A549 (cell line): ENCODE measurements at regions of chr1 and their contacts with region 1.

Region 1: DNA sequence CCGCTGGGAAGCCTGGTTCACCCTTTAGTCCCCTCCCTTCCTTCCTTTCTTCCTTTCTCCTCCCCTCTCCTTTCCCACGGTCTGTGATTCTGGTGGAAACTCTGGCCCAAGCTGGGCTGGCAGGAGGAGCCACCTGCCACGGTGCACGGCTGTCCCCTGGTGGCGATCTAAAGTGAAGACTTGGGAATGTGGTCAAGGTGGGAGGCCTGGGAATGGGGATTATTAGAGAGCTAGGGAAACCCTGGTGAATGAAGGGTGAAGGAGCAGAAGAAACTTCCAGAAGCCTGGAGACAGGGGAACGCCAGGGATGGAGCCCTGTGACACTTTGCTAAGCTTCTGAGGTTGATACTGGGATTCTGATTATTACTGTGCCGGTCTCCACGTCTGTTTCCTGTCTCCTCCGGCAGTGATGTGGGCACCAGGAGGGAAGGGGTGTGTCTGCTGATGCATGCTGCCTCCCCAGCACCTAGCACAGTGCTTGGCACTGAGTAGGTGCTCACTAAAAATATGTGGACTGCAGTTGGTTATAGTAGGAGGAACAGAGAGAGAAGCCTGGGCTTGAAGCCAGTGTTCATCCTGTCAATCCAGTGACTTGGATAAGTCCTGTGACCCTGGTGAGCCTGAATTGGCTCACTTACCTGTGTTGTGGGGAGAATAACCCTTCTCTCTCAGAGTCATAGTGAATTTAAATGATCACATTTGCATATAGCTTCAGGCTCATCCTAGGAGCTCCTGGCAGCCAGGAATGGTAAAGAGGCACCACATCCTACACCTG is 71.2 kb upstream of the NBPF3 start:
- DNase-seq: peak; percentile 37 to 78
- ATAC-seq: peak; percentile 96 to 97
- H3K4me3 ChIP-seq: no peak overlapping the region
- H3K27ac ChIP-seq: peak overlapping the region; percentile 32 to 65; a peak in 4 of 6 replicates
- H3K4me1 ChIP-seq: peaks cover 4% of the 10 kb centered on the region; the same call in 1 of the 3 replicates
- CTCF ChIP-seq: peak; percentile 94
- EP300 ChIP-seq: no peak
- POLR2A ChIP-seq: no peak
- RAD21 ChIP-seq: peak; percentile 99 to 100

Region 2: GRCh38 chr1:21238141-21238800 is 130.4 kb before region 1 on chr1:
- CTCF ChIA-PET with region 1: interaction called, 115 read pairs
- POLR2A ChIA-PET with region 1: no interaction called
- DNase-seq: no peak
- ATAC-seq: no peak
- H3K4me3 ChIP-seq: no peak overlapping the region
- H3K27ac ChIP-seq: no peak overlapping the region
- H3K4me1 ChIP-seq: no peaks in the 10 kb centered on the region
- CTCF ChIP-seq: no peak
- EP300 ChIP-seq: no peak
- POLR2A ChIP-seq: no peak
- RAD21 ChIP-seq: no peak

Region 3: DNA sequence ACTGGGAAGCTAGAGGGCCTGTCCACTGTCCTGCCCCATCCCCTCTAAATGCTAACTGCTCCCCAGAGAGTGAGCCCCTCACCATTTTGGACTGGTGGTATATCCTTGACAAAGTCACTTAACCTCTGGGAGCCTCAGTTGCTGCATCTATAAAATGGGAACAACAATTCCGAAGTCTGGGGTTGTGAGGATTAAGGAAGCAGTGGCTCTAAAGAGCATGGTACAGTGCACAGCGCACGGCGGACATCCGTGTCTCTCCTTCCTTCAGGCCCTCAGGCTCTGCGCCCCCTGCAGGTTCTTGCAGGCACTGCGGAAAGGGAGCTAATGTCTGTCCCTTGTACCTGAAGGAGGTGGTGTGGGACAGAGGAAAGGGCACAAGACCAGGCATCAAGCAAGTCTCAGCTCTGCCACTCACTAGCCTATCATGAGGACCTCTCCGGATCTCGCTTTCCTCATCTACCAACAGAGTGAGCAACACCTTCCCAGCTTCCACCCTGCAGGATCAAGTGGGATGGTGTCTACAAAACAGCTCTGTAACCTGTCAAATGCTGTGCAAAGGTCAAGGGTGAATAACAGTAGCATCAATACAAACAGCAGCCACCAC is 98.5 kb before region 1 on chr1:
- CTCF ChIA-PET with region 1: interaction called, 41 read pairs
- POLR2A ChIA-PET with region 1: no interaction called
- DNase-seq: peak; percentile 74 to 75
- ATAC-seq: peak; percentile 65 to 78; a peak in 5 of 6 replicates
- H3K4me3 ChIP-seq: no peak overlapping the region
- H3K27ac ChIP-seq: peak overlapping the region; percentile 95; a peak in 5 of 6 replicates
- H3K4me1 ChIP-seq: peaks cover 55% of the 10 kb centered on the region
- CTCF ChIP-seq: peak; percentile 72
- EP300 ChIP-seq: no peak
- POLR2A ChIP-seq: no peak
- RAD21 ChIP-seq: peak; percentile 35 to 57; a peak in 3 of 5 replicates

Region 4: GRCh38 chr1:21350187-21350885 is 18.4 kb before region 1 on chr1:
- CTCF ChIA-PET with region 1: interaction called, 26 read pairs
- POLR2A ChIA-PET with region 1: no interaction called
- DNase-seq: no peak
- ATAC-seq: no peak
- H3K4me3 ChIP-seq: no peak overlapping the region
- H3K27ac ChIP-seq: no peak overlapping the region
- H3K4me1 ChIP-seq: peaks cover 7% of the 10 kb centered on the region; the same call in 2 of the 3 replicates
- CTCF ChIP-seq: no peak
- EP300 ChIP-seq: no peak
- POLR2A ChIP-seq: no peak
- RAD21 ChIP-seq: no peak

Region 5: GRCh38 chr1:21534674-21535378 is 166.1 kb after region 1 on chr1:
- CTCF ChIA-PET with region 1: interaction called, 23 read pairs
- POLR2A ChIA-PET with region 1: no interaction called
- DNase-seq: peak; percentile 54 to 60
- ATAC-seq: peak; percentile 90 to 95
- H3K4me3 ChIP-seq: no peak overlapping the region
- H3K27ac ChIP-seq: no peak overlapping the region
- H3K4me1 ChIP-seq: no peaks in the 10 kb centered on the region
- CTCF ChIP-seq: peak; percentile 44
- EP300 ChIP-seq: no peak
- POLR2A ChIP-seq: no peak
- RAD21 ChIP-seq: peak; percentile 46 to 48; a peak in 4 of 5 replicates

Region 6: GRCh38 chr1:21659099-21659923 is 290.6 kb after region 1 on chr1:
- CTCF ChIA-PET with region 1: interaction called, 28 read pairs
- POLR2A ChIA-PET with region 1: no interaction called
- DNase-seq: peak; percentile 60 to 63
- ATAC-seq: peak; percentile 55 to 75
- H3K4me3 ChIP-seq: no peak overlapping the region
- H3K27ac ChIP-seq: no peak overlapping the region
- H3K4me1 ChIP-seq: peaks cover 17% of the 10 kb centered on the region
- CTCF ChIP-seq: peak; percentile 72
- EP300 ChIP-seq: no peak
- POLR2A ChIP-seq: no peak
- RAD21 ChIP-seq: peak; percentile 87 to 91